Posterior vena cava (tissue), 2 donors: ENCODE measurements at regions of chr13 and their contacts with region 1.

Region 1: DNA sequence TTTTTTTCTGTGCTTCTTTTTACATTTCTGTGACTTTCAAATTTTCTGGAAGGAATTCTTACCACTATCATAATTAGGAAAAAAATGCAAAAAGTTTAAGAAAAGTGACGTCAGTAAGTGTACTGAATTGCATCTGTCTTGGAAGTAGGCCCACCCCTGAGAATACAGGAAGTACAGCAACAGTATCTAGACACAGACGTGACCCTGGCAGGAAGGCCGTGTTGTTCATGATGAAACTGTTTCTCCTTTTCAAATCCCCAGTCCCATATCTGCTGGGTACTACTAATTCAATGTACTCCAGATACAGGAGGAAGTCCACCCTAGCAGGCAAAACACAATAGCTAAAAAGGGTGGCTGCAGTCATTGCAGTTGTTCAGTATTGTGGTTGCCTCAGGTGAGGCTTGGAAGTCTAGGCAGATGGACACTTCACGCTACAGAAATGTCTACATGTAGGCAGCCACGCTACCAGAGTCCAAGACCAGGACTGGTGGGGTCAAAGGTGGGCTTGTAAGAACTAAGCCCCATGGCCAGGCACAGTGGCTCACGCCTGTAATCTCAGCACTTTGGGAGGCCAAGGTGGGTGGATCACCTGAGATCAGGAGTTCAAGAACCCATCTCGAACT is 49.6 kb upstream of the MED4 start:
- DNase-seq: no peak

Region 2: DNA sequence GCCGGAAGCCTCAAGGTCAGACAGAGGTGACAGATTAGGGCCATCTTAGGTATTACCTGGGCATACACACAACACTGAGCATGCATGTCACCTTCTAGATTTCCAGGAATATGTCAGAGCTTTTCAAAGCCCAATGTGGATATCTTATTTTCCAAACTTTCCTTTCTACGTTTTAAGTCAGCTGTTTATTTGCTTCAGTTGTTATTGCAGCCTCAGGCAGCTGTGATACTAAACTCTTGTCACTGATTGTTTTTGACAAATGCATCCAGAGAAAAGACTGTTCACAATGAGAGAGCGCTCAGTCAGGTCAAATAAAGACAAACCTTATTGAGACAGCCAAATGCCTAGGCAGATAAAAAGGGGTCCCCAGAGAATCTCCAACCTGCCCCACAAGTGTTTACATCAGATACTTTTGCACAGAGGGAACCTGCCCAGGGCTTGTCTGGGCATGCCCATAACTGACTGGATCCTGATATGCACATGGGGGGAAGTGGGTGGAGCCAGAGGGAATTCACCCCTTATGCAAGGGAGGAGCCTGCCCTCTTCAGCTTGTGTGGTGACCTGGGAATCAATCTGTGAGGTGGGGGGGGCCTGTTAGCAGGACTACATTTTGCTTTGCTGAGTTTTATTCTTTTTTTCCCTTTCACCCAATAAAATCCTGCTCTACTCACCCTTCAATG is 78.1 kb before region 1 on chr13:
- intact Hi-C with region 1: no loop called
- DNase-seq: no peak

Region 3: DNA sequence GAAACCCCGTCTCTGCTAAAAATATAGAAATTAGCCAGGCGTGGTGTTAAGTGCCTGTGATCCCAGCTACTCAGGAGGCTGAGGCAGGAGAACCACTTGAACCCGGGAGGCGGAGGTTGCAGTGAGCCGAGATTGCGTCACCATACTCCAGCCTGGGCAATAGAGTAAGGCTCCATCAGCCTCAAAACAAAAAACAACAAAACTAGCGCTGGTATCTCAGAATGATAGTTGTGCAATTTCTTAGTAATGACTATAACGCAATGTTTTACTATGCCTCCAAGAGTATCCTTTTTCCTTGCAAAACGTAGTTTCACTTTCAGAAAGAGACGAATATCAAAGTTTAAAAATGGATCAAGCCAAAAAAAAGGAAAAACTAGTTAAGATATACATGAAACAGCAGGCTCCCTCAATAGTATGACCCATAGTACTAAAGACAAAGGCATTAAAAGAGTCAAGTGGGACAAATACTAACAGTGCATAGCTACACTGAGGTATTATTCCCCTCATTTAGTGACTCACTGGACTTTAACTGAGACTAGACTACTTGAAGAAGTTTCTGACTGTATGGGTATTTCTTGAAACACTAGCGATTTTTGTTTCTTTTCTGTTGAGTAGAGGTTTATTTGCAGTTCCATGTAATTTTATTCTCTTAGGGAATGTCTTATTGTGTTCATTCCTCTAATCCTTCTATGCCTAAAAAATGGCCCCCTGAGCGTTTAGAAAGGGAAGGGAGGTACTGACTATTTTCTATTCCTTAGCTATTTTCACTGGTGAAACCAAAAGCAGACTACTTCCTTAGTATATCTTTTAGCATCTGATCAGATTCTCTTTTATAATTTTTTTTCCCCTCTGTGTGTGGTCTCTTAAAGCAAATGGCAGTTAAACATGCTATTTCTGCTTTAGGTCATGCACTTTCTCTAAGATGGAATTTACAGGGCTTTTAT is 78.1 kb after region 1 on chr13:
- intact Hi-C with region 1: loop called in 1 of 2 experiments (anchors 10 kb)
- DNase-seq: no peak

Region 4: DNA sequence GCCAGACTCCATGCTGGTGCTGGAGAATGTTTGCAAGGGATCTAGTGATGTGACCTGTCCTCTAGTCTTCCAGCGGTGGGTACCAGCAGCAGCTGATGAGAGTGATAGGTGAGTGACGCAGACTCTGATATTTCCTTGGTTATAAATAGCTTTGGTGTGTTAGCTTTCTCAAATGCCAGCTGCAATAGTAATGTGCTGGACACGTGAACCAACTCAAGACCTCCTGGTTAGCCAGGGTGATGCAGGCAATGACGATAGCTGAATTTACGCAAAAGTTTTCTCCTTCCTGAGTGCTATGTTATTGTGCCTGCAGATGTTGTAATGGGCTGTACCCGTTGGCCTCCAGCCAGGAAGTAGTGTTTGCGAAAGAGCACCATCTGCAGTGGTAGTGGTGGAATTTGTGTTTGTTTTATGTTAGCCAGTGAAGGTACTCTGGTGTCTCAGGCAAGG is 638.7 kb after region 1 on chr13:
- intact Hi-C with region 1: no loop called
- DNase-seq: peak; percentile 89